H1 (cell line): ENCODE measurements at regions of chr11 and their contacts with region 1.

Region 1: GRCh38 chr11:91773090-91773489 is 451.5 kb upstream of the FAT3 start:
- DNase-seq: peak; percentile 7 to 49
- H3K4me3 ChIP-seq: no peak overlapping the region
- H3K27ac ChIP-seq: no peak overlapping the region
- H3K4me1 ChIP-seq: no peaks in the 10 kb centered on the region
- H3K27me3 ChIP-seq: no peaks in the 10 kb centered on the region
- CTCF ChIP-seq: peak in 2 of 3 experiments; percentile 49 to 55; a peak in 3 of 4 replicates
- EP300 ChIP-seq: no peak
- POLR2A ChIP-seq: no peak
- RAD21 ChIP-seq: peak; percentile 82 to 83

Region 2: GRCh38 chr11:92070026-92070889 is 297.2 kb after region 1 on chr11:
- CTCF ChIA-PET with region 1: interaction called, 14 read pairs
- POLR2A ChIA-PET with region 1: no interaction called
- DNase-seq: peak in 1 of 2 experiments; percentile 47
- H3K4me3 ChIP-seq: no peak overlapping the region
- H3K27ac ChIP-seq: no peak overlapping the region
- H3K4me1 ChIP-seq: no peaks in the 10 kb centered on the region
- H3K27me3 ChIP-seq: no peaks in the 10 kb centered on the region
- CTCF ChIP-seq: peak in 2 of 3 experiments; percentile 29 to 31; a peak in 2 of 4 replicates
- EP300 ChIP-seq: no peak
- POLR2A ChIP-seq: no peak
- RAD21 ChIP-seq: peak; percentile 71 to 72